ENCODE measurements at regions of chr5 and their contacts with region 1.

Region 1: DNA sequence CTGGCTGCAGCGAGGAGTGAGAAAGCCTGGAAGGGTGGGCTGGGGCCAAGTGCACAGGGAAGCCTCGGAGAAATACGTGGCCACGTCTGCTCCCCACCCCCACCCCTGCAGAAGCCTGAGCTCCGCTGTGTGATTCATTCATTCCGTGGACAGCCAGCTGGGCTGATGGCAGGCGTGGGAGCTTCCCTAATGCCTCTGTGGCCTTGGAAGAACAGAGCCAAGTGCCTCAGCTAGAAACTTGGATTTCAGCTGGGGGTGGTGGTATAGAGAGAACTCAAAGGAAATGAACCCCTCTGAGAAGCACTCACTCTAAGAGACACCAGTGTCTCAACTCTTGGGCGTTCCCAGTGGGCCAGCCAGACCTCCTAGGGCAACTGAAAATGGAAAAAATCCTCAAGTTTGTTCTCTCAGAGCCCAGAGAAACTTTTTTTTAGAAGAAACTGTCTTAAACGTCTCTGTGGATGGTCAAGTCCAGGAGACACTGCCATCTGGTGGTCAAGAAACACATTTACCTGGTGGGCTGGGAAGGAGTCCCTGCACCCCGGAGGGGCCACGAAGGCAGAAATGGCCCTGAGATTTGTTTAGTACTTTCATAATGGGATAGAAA is 18.0 kb downstream of the ATOX1 start:
- DNase-seq: peak; percentile 84
- H3K4me3 ChIP-seq: no peak overlapping the region
- H3K27ac ChIP-seq: peak overlapping the region; percentile 43
- H3K4me1 ChIP-seq: peaks cover 14% of the 10 kb centered on the region
- H3K27me3 ChIP-seq: no peaks in the 10 kb centered on the region
- CTCF ChIP-seq: peak; percentile 90

Region 2: DNA sequence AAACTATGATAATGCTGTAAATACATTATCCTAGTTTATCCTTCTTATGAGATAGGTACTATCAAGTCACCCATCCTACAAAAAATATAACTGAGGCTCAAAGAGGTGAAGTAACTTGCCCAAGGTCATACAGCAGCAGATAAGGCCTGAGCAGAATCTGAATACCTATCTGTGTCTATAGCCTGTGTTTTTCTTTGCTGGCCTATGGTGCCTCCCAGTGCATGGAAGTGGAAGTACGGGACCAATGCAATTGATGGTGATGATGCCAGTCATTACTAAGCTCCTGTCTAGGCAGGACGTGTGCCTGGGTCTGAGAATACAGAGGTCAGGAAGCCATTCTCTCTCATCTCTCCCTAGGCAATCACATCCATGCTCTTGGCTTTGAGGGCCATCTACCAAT is 217.1 kb before region 1 on chr5:
- CTCF ChIA-PET with region 1: no interaction called
- POLR2A ChIA-PET with region 1: no interaction called
- intact Hi-C with region 1: loop called (anchors 10 kb)
- DNase-seq: peak; percentile 47
- H3K4me3 ChIP-seq: no peak overlapping the region
- H3K27ac ChIP-seq: no peak overlapping the region
- H3K4me1 ChIP-seq: no peaks in the 10 kb centered on the region
- H3K27me3 ChIP-seq: no peaks in the 10 kb centered on the region
- CTCF ChIP-seq: peak; percentile 59

Region 3: DNA sequence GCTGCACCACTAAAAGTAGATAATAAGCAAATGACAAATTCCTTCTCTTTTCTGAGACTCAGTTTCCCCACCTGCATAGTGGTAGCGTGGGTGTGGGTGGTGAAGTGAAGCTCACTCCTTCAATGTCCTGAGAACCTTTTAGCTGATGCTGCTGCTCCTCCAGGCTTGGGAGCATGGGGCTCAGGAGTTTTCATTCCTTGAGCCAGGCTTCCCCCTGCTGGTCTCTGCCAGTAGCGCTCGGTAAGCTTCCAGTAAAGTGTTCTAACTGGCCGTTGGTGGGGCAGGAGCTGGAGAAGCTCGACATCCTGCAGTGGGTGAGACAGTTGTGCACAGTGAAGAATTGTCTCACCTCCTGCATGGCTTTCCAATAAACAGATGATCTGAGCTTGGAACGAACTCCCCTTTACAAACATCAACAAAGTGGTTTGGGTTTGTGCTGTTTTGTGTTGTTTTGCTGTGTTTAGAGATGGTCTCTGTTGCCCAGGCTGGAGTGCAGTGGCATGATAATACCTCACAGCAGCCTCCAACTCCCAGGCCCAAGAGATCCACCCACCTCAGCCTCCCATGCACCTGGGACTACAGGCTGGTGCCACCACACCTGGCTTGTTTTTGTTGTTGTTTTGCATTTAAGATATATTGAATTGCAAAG is 88.3 kb before region 1 on chr5:
- CTCF ChIA-PET with region 1: interaction called, 42 read pairs
- POLR2A ChIA-PET with region 1: no interaction called
- intact Hi-C with region 1: no loop called
- DNase-seq: peak; percentile 84
- H3K4me3 ChIP-seq: no peak overlapping the region
- H3K27ac ChIP-seq: no peak overlapping the region
- H3K4me1 ChIP-seq: no peaks in the 10 kb centered on the region
- H3K27me3 ChIP-seq: no peaks in the 10 kb centered on the region
- CTCF ChIP-seq: peak; percentile 88

Measured in A673 (cell line).